BJ (cell line): ENCODE measurements at regions of chr4 and their contacts with region 1.

Region 1: GRCh38 chr4:15396157-15396800 is 31.6 kb upstream of the C1QTNF7 start:
- DNase-seq: no peak
- H3K4me3 ChIP-seq: no peak overlapping the region
- H3K27me3 ChIP-seq: peaks cover under 1% of the 10 kb centered on the region
- CTCF ChIP-seq: peak; percentile 75

Region 2: GRCh38 chr4:14504162-14504561 is 892.1 kb before region 1 on chr4:
- CTCF ChIA-PET with region 1: no interaction called
- POLR2A ChIA-PET with region 1: no interaction called
- DNase-seq: no peak
- H3K4me3 ChIP-seq: no peak overlapping the region
- H3K27me3 ChIP-seq: no peaks in the 10 kb centered on the region
- CTCF ChIP-seq: no peak

Region 3: GRCh38 chr4:15231265-15232091 is 164.8 kb before region 1 on chr4:
- CTCF ChIA-PET with region 1: interaction called, 11 read pairs
- POLR2A ChIA-PET with region 1: no interaction called
- DNase-seq: no peak
- H3K4me3 ChIP-seq: no peak overlapping the region
- H3K27me3 ChIP-seq: 0 out of 2 replicates have a peak, but pooled peaks cover 2% of the 10 kb centered on the region
- CTCF ChIP-seq: peak; percentile 76

Region 4: DNA sequence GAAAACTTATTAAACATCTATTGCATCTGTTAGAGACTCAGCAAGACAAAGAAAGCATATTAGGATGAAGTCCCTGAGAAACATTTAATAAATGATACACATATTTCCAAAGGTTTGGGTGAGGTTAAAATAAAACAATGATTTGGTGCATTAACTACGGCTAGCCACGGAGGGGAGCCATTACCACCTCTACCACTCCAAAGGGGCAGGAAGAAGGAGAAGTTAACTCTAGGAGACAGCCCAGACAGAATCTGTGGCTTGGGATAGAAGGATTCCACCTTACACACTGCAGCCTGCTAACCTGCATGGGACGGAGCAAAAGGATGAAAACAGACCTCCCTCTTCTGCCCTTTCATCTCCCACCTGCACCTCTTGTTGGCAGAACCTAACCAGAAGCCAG is 157.6 kb before region 1 on chr4:
- CTCF ChIA-PET with region 1: interaction called, 14 read pairs
- POLR2A ChIA-PET with region 1: no interaction called
- DNase-seq: no peak
- H3K4me3 ChIP-seq: no peak overlapping the region
- H3K27me3 ChIP-seq: peaks cover 13% of the 10 kb centered on the region
- CTCF ChIP-seq: peak; percentile 66

Region 5: GRCh38 chr4:15378062-15378461 is 18.2 kb before region 1 on chr4:
- CTCF ChIA-PET with region 1: interaction called, 34 read pairs
- POLR2A ChIA-PET with region 1: no interaction called
- DNase-seq: no peak
- H3K4me3 ChIP-seq: no peak overlapping the region
- H3K27me3 ChIP-seq: no peaks in the 10 kb centered on the region; the same call in 1 of the 2 replicates
- CTCF ChIP-seq: no peak

Region 6: GRCh38 chr4:15385928-15386327 is 10.4 kb before region 1 on chr4:
- CTCF ChIA-PET with region 1: interaction called, 34 read pairs
- POLR2A ChIA-PET with region 1: no interaction called
- DNase-seq: no peak
- H3K4me3 ChIP-seq: no peak overlapping the region
- H3K27me3 ChIP-seq: peaks cover 14% of the 10 kb centered on the region
- CTCF ChIP-seq: no peak

Region 7: DNA sequence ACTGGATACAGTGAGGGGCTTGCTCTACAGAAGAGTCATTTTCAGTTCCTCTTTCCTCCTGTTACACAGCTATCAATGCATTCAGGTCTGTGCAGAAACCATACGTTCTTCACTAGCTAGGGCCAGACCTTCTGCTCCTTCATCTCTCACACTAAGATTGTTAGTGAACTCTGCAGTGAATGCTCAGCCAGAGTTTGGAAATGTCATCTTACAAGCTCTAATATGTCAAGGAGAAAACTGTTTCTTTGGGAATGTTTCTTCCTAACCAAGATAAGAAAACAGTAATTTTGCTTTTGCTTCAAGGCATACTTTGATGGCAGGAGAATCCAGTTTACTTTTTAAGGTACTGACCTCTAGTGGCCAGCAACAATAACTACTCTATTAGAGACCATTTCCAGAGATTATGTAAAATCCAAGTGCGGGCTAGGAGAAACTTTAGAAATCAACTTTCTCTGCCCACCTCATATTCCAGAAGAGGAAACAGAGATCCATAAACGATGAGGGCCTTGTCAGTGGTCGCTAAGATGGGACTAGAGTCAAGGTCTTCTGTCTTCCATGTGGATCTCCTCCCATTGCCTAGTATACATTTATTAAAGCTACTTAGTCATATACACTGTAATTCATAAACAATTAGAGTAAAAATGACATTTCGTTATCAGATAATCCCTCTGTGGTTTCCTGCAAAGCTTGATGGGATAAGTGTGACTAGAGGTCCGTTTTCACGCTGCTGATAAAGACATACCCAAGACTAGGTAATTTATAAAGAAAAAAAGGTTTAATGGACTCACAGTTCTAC is 61.3 kb after region 1 on chr4:
- CTCF ChIA-PET with region 1: interaction called, 18 read pairs
- POLR2A ChIA-PET with region 1: no interaction called
- DNase-seq: no peak
- H3K4me3 ChIP-seq: no peak overlapping the region
- H3K27me3 ChIP-seq: peaks cover 7% of the 10 kb centered on the region; the same call in 1 of the 2 replicates
- CTCF ChIP-seq: peak; percentile 66

Region 8: GRCh38 chr4:15976456-15977447 is 580.5 kb after region 1 on chr4:
- CTCF ChIA-PET with region 1: no interaction called
- POLR2A ChIA-PET with region 1: no interaction called
- DNase-seq: no peak
- H3K4me3 ChIP-seq: no peak overlapping the region
- H3K27me3 ChIP-seq: peaks cover 3% of the 10 kb centered on the region
- CTCF ChIP-seq: no peak

Region 9: GRCh38 chr4:16067515-16067914 is 671.2 kb after region 1 on chr4:
- CTCF ChIA-PET with region 1: no interaction called
- POLR2A ChIA-PET with region 1: no interaction called
- DNase-seq: no peak
- H3K4me3 ChIP-seq: no peak overlapping the region
- H3K27me3 ChIP-seq: no peaks in the 10 kb centered on the region
- CTCF ChIP-seq: no peak